ENCODE measurements at regions of chr9 and their contacts with region 1.

Region 1: GRCh38 chr9:87280421-87280820 is 217.2 kb upstream of the DAPK1 start:
- DNase-seq: peak; percentile 92
- ATAC-seq: peak; percentile 71
- H3K4me3 ChIP-seq: no peak overlapping the region
- H3K27ac ChIP-seq: peak overlapping the region; percentile 95
- H3K4me1 ChIP-seq: peaks cover 31% of the 10 kb centered on the region
- H3K27me3 ChIP-seq: no peaks in the 10 kb centered on the region
- CTCF ChIP-seq: no peak
- POLR2A ChIP-seq: no peak
- RAD21 ChIP-seq: no peak

Region 2: GRCh38 chr9:87193925-87194868 is 86.2 kb before region 1 on chr9:
- CTCF ChIA-PET with region 1: no interaction called
- POLR2A ChIA-PET with region 1: no interaction called
- dilution Hi-C with region 1: no loop called
- in situ Hi-C with region 1: no loop called
- intact Hi-C with region 1: loop called (anchors 5 kb)
- DNase-seq: peak; percentile 94
- ATAC-seq: peak; percentile 95
- H3K4me3 ChIP-seq: no peak overlapping the region; the same call in 1 of the 2 replicates
- H3K27ac ChIP-seq: peak overlapping the region; percentile 78
- H3K4me1 ChIP-seq: peaks cover 14% of the 10 kb centered on the region
- H3K27me3 ChIP-seq: 0 out of 2 replicates have a peak, but pooled peaks cover 5% of the 10 kb centered on the region
- CTCF ChIP-seq: no peak
- POLR2A ChIP-seq: no peak
- RAD21 ChIP-seq: no peak

Region 3: DNA sequence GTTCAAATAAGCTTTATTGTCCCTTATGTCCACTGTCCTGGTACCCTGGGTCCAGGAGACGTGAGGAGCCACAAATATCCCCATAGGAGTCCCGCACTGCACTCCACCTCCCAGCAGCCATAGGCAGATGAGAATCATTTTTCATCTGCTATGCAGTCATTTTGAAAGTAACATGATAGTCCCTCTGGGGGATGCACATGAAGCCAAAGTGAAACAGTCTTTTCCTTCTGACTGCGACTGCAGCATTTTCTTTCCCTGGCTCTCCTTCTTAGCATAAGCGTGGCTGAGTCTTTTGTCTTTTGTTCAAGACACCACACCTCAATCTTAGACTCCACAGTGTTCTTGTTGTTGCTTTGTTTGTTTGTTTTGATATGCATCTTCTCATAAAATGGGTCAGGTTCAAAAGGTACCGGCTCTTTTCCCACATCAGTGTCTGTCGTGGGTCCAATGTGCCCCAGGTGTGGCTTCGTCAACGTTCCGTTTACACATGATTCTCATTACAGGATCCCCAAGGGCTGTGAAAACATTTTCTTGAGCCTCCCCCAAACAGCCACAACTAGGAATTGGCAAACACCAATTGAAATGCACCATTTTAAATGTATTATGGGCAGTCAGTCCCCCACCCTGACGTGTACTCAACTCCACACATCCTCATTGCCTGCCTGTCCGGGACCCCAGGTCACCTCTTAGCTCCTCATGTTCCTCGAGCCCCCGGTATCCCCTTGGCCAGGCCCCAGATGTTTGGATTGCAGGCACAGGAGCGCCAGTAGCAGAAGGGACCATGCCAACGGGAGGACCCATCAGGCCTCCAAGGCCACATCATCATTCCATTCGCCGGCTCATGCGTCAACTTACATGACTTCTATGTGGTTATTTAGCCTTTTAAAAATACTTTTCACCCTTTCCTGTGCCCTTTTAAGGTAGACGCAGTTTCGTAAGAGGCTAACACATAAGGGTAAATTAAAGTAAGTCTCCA is 20.6 kb before region 1 on chr9:
- CTCF ChIA-PET with region 1: no interaction called
- POLR2A ChIA-PET with region 1: no interaction called
- dilution Hi-C with region 1: no loop called
- in situ Hi-C with region 1: no loop called
- intact Hi-C with region 1: no loop called
- DNase-seq: no peak
- ATAC-seq: no peak
- H3K4me3 ChIP-seq: no peak overlapping the region
- H3K27ac ChIP-seq: no peak overlapping the region
- H3K4me1 ChIP-seq: peaks cover 10% of the 10 kb centered on the region; the same call in 1 of the 2 replicates
- H3K27me3 ChIP-seq: no peaks in the 10 kb centered on the region
- CTCF ChIP-seq: no peak
- POLR2A ChIP-seq: no peak
- RAD21 ChIP-seq: no peak

Measured in IMR-90 (cell line).